Activated CD4-positive, alpha-beta T cell treated with anti-CD3 and anti-CD28 coated beads, Interleukin-2, amount 10 ng/mL, durations not matched to agents 24 days and 14 days (primary cell): ENCODE measurements at regions of chrX and their contacts with region 1.

Region 1: GRCh38 chrX:40013266-40014195 is 84.2 kb downstream of the BCOR start:
- DNase-seq: peak; percentile 86
- H3K4me3 Mint-ChIP-seq: peak overlapping the region; percentile 80
- H3K27ac Mint-ChIP-seq: peak overlapping the region; percentile 88
- H3K4me1 Mint-ChIP-seq: peaks cover 18% of the 10 kb centered on the region
- H3K27me3 Mint-ChIP-seq: peaks cover 11% of the 10 kb centered on the region

Region 2: DNA sequence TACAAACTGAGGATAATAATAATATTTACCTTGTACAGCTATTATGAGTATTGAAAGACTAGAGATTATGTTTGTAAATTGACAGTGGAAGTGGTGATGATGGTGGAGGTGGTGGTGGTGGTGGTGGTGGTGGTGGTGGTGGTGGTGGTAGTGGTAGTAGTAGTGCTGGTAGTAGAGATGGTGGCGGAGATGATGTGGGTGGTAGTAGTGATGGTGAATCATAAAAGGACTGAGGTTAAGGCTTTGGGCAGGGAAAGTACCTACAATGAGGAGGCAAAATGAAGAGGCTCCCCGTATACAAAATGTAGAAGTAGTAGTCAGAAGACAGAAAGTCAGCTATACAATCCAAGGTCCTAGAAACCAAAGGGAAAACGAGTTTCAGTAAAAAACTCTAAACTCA is 129.9 kb before region 1 on chrX:
- intact Hi-C with region 1: loop called (anchors 5 kb)
- DNase-seq: peak; percentile 68
- H3K4me3 Mint-ChIP-seq: peak overlapping the region; percentile 13
- H3K27ac Mint-ChIP-seq: peak overlapping the region; percentile 79
- H3K4me1 Mint-ChIP-seq: peaks cover 17% of the 10 kb centered on the region
- H3K27me3 Mint-ChIP-seq: peaks cover 4% of the 10 kb centered on the region

Region 3: DNA sequence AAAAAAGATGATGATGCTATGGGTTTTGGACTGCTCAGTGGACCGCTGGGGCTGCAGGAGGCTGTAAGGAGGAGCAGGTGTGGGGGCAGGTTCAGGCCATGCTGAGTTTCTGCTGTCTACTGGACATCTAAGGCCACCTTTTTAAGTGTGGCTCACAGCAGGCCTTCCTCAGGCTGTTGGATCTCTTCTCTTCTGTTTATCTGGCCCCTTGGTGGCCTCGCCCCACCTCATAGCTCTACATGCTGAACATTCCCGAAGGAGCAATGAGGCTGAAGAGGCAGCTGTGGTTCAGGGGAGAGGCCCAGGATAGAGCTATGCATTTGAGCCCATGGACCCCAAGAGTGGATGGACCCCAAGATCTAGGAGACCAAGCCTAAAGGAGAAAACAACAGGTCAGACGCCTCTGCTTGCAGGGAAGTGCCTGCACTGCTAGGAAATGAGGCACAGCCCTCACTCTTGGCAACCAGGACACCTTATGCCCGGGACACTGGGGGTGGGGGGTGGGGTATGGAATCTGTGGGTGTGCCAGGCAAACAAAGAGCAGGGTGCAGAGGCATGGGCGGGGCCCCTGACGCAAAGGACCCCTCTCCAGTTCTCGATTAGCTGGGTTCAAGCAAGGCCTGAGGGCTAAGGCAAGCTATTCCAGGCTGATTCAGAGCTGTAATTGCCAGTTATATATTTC is 84.7 kb before region 1 on chrX:
- intact Hi-C with region 1: no loop called
- DNase-seq: no peak
- H3K4me3 Mint-ChIP-seq: no peak overlapping the region
- H3K27ac Mint-ChIP-seq: no peak overlapping the region
- H3K4me1 Mint-ChIP-seq: peaks cover 3% of the 10 kb centered on the region
- H3K27me3 Mint-ChIP-seq: no peaks in the 10 kb centered on the region

Region 4: DNA sequence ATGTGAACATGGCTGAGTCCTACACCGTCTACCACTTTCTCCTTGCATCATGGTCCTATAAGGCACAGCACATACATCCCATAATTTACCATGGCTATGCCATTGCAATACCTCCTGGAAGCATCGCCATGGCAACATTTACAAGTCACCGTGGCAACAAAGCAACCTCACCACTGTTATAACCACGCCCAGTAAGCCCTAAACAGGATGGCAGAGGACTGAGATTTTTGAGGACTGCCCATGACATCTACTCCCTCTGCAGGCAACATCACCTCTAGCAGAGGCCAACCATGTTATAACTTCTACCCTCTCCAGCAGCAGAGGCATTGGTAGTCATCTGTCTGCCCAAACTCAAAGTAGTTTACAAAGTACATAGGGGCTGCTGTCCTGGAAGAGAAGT is 54.5 kb after region 1 on chrX:
- intact Hi-C with region 1: loop called (anchors 10 kb)
- DNase-seq: peak; percentile 78
- H3K4me3 Mint-ChIP-seq: no peak overlapping the region
- H3K27ac Mint-ChIP-seq: peak overlapping the region; percentile 13
- H3K4me1 Mint-ChIP-seq: peaks cover 49% of the 10 kb centered on the region
- H3K27me3 Mint-ChIP-seq: no peaks in the 10 kb centered on the region